ENCODE measurements at regions of chr1 and their contacts with region 1.

Region 1: DNA sequence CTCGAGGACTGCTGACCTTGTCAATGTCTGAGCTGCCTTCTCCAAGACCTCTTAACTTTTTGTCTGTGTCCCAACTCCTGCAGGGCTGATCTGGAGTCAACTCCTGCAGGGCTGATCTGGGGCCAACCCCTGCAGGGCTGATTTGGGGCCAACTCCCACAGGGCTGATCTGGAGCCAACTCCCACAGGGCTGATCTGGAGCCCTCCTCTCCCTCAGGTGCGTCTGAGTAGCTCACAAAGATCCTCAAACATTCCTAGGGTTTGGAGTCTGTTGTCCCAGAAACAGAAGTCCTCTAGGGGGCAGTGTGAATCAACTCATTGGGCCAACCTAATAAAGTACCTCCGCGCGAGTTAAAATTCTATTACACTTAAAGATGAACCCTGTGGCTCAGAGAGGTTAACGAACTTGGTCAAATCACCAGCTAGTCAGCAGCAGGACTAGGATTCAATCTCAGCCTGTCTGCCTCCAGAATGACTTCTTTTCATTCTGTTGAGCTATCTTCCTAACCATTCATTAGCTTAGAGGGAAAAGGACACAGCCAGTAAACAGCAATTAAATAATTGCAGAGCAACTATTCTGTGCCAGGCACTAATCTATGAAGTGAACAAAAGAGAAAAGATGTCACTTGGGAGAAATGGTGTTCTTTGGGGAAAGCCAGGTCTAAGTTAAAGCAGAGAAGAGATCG is 17.2 kb upstream of the RLF start:
- DNase-seq: peak; percentile 54
- CTCF ChIP-seq: peak; percentile 48

Region 2: DNA sequence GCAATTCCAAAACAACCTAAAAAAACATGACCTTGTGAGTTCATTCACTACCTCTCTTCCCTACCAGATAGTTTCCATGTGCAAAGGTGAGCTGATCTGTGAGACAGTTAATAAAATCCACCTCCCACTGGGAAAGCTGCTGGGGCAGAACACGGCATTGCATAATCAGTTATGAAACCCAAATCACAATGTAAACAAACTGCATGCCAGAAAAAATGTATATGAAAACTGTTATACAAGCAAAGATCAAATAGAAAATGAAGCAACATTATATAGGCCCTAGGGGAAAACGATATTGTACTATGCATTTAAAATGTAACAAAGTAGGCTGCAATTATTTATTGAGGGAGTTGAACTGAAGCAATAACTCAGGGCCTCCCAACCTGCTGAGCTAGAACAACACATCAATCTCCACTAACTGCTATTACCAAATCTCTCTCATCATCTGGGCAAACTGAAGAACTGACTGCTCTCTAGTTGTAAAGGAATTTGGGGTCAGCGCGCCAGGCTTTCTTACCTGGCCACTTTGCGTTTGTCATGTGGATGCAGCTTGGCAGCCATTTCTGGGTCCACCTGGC is 291.7 kb before region 1 on chr1:
- CTCF ChIA-PET with region 1: no interaction called
- POLR2A ChIA-PET with region 1: no interaction called
- DNase-seq: no peak
- CTCF ChIP-seq: no peak

Region 3: GRCh38 chr1:39960431-39960958 is 183.5 kb before region 1 on chr1:
- CTCF ChIA-PET with region 1: no interaction called
- POLR2A ChIA-PET with region 1: no interaction called
- DNase-seq: peak; percentile 64
- CTCF ChIP-seq: no peak

Region 4: DNA sequence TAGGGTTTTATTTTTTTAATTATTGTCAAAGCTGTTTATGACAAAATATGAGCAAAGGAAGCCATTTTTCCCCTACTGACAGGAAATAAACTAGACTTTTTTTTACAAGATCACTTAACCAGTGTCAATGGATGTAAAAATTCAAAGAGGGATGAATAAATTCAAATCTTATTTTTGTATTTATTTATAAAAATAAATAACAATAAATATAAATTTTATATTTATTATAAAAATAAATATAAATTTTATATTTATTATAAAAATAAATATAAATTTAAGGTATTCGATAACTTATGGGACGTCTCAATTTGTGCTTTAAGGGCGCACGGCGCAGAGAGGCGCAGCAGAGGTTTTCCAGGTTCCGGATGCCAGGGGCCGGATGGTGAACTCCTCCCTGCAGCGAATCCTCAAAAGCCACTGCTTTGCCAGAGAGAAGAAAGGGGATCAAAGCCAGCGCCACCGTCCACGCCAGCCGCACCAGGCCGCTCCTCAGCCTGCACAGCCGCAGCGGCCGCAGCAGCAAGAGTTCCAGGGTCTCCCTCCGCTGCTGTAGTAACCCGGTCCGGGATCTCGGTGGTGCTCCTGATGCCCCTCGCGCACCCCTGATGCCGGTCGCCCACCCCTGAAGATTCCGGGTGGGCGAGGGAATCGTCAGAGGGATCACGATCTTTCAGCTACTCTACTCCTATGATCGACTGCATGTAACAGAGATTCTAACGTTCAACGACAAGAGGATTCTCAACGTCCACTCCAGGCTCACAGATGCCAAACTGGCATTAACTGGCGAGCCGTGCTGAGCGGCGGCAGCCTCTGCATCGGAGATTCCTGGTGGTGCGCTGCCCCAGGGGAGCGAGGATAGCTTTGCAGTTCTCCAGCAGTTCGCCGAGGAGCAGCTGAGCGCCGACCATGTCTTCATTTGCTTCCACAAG is 11.4 kb before region 1 on chr1:
- CTCF ChIA-PET with region 1: interaction called, 17 read pairs
- POLR2A ChIA-PET with region 1: no interaction called
- DNase-seq: no peak
- CTCF ChIP-seq: no peak

Region 5: GRCh38 chr1:40185951-40186864 is 42.2 kb after region 1 on chr1:
- CTCF ChIA-PET with region 1: interaction called, 13 read pairs
- POLR2A ChIA-PET with region 1: no interaction called
- DNase-seq: peak; percentile 76
- CTCF ChIP-seq: no peak

Region 6: GRCh38 chr1:40315239-40315794 is 171.3 kb after region 1 on chr1:
- CTCF ChIA-PET with region 1: interaction called, 46 read pairs
- POLR2A ChIA-PET with region 1: no interaction called
- DNase-seq: peak; percentile 88
- CTCF ChIP-seq: peak; percentile 90

Region 7: GRCh38 chr1:40352126-40352525 is 208.1 kb after region 1 on chr1:
- CTCF ChIA-PET with region 1: interaction called, 11 read pairs
- POLR2A ChIA-PET with region 1: no interaction called
- DNase-seq: peak; percentile 52
- CTCF ChIP-seq: no peak

Region 8: DNA sequence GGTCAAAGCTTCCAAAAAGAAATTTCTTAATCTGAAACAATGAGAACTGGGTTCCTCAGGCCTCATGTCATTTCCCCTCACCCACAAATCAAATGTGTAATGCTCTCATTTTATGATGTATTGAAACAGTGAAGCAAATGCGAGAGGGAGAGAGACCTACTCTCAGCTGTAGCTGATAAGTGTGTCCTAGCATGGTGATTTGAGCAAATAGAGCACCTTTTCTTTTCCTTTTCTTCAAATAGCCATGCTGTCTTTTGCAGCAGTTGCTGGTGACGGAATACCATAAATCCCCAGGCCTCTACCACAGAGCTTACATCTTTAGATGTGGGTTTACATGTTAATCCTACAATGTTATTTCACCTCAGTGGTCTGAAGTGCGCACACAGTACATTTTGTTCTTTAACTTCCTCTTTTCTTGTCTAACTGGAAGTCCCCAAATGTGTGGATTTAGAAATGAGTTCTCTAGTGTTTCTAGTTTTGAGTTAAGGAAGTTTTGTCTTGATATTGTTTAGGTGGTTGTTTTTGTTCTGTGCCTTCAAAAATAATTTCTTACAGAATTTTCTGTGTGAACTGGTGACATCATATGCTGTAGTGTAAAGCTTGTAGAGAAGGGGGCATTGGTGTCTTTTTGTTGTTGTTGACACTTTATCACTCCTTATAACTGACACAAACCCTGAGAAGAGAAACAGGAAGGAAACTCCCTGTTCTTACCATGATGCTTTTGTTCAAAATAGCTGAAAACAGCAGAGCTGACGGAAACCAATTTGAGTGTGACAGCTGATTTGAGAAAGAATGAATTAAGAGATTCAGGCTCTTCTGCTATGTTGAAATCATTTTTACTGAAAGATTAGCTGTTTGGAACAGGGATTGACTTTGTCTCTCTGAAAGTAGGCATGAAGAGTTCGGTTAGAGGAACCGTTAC is 241.7 kb after region 1 on chr1:
- CTCF ChIA-PET with region 1: interaction called, 19 read pairs
- POLR2A ChIA-PET with region 1: no interaction called
- DNase-seq: peak; percentile 52
- CTCF ChIP-seq: no peak

Region 9: GRCh38 chr1:40411294-40411693 is 267.3 kb after region 1 on chr1:
- CTCF ChIA-PET with region 1: interaction called, 10 read pairs
- POLR2A ChIA-PET with region 1: no interaction called
- DNase-seq: no peak
- CTCF ChIP-seq: no peak